Activated T-helper 1 cell treated with anti-CD3 and anti-CD28 coated beads, Interleukin-12 subunit alpha, Interleukin-12 subunit beta, Interleukin-2, Interleukin-4 antibody, amounts not matched to agents 30 ng/mL and 10 ng/mL and 1 ng/mL, durations not matched to agents 14 hours and 24 hours and 36 hours (primary cell): ENCODE measurements at regions of chr2 and their contacts with region 1.

Region 1: GRCh38 chr2:97718051-97718882 is 4.9 kb downstream of the ZAP70 start:
- DNase-seq: peak; percentile 71
- H3K4me3 Mint-ChIP-seq: peak overlapping the region; percentile 94
- H3K27ac Mint-ChIP-seq: peak overlapping the region; percentile 93
- H3K4me1 Mint-ChIP-seq: peaks cover 69% of the 10 kb centered on the region
- H3K27me3 Mint-ChIP-seq: no peaks in the 10 kb centered on the region

Region 2: GRCh38 chr2:97740590-97741182 is 22.4 kb after region 1 on chr2:
- intact Hi-C with region 1: loop called (anchors 2 kb)
- DNase-seq: no peak
- H3K4me3 Mint-ChIP-seq: no peak overlapping the region
- H3K27ac Mint-ChIP-seq: peak overlapping the region; percentile 18
- H3K4me1 Mint-ChIP-seq: peaks cover 56% of the 10 kb centered on the region
- H3K27me3 Mint-ChIP-seq: no peaks in the 10 kb centered on the region

Region 3: GRCh38 chr2:97769308-97769707 is 51.0 kb after region 1 on chr2:
- intact Hi-C with region 1: loop called (anchors 2 kb)
- DNase-seq: no peak
- H3K4me3 Mint-ChIP-seq: no peak overlapping the region
- H3K27ac Mint-ChIP-seq: no peak overlapping the region
- H3K4me1 Mint-ChIP-seq: peaks cover 25% of the 10 kb centered on the region
- H3K27me3 Mint-ChIP-seq: no peaks in the 10 kb centered on the region